Tibial artery (tissue), 4 donors: ENCODE measurements at regions of chr15 and their contacts with region 1.

Region 1: GRCh38 chr15:50354838-50355618 is at the start of gene GABPB1:
- DNase-seq: peak; percentile 73 to 91
- H3K4me3 ChIP-seq: peak within 1 kb of the TSS; percentile 94 to 99
- H3K27ac ChIP-seq: peak within 1 kb of the TSS; percentile 97 to 100
- H3K4me1 ChIP-seq: peaks cover 0 to 50% (median 36%) of the 10 kb centered on the region in 4 donors
- H3K27me3 ChIP-seq: no peaks in the 10 kb centered on the region
- CTCF ChIP-seq: no peak

Region 2: DNA sequence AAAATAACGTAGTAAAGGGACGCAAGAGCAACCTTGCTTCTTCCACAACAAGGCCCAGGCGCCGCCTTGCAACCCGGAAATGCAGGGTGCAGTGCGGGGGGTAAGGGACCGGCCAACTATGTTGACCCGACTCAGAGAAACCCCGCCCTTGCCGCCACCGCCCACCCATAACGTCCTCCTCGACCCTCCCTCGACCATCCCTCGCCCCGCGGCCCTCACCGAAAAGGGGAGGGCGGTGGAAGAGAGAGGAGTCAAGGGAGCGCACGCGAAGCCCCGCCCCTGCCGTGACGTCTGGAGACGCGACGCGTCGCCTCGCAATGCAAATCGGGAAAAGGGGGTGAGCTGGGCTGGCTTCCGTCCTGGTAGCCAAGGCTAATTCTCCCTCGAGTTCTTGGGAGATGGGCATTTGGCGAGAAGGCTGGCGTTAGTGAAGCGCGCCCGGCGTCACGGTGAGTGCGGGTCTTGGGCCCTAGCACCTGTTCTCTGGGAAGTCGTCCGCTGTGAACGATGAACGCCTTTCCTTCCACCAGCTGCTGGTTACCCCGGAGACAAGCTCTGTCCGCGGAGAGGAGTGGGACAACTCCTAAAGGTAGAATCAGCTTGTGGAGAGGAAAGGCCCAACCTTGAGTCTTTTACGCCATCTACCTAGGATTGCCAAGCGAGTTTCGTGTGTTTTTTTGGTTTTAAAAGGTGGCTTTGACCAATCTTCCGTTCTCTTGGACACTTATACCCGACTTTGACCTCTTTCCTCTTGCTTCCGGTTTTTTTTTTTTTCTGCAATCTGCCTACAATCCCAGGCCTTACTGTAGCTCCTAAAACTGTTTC is 69.2 kb after region 1 on chr15 and contains the start of gene USP8:
- intact Hi-C with region 1: loop called (anchors 2 kb)
- DNase-seq: peak; percentile 93 to 96
- H3K4me3 ChIP-seq: peak within 1 kb of the TSS; percentile 71 to 82
- H3K27ac ChIP-seq: peak within 1 kb of the TSS; percentile 84 to 92
- H3K4me1 ChIP-seq: peaks cover 3 to 27% (median 15%) of the 10 kb centered on the region in 4 donors
- H3K27me3 ChIP-seq: no peaks in the 10 kb centered on the region
- CTCF ChIP-seq: no peak

Region 3: GRCh38 chr15:50476143-50476542 is 121.1 kb after region 1 on chr15:
- intact Hi-C with region 1: no loop called
- DNase-seq: no peak
- H3K4me3 ChIP-seq: no peak overlapping the region
- H3K27ac ChIP-seq: no peak overlapping the region
- H3K4me1 ChIP-seq: no peaks in the 10 kb centered on the region
- H3K27me3 ChIP-seq: no peaks in the 10 kb centered on the region
- CTCF ChIP-seq: no peak